ENCODE measurements at regions of chr9 and their contacts with region 1.

Region 1: DNA sequence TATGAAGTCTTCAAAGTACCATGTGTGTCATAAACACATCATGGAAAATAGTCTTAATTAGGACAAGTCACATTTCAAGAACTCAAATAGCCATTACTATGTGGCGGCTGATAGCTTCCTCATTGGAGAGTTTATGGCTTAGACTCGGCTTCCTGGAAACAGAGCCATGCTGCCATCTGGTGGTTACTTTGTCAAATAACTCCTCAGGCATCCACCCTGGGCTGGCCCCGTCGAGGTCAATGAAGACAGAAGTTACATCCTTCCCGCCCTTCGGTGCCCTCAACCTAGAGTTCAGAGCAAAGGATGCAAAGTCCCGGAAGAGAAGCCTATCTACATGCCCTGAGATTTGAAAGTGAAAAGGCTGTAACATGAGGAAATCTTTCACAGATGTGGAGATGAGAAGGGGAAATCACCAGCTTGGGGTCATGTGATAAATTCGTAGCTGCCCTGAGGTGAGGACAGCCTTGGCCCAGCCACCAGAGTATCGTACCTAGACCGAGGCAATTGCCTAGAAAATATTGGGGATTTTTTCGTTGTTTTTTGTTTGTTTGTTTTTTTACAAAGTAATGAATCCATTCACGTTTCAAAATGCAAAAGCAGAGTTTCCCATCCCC is 45.5 kb upstream of the ZNF169 start:
- DNase-seq: peak; percentile 40 to 82
- ATAC-seq: peak; percentile 90 to 97 (median 96)
- H3K4me3 ChIP-seq: no peak overlapping the region
- H3K27ac ChIP-seq: no peak overlapping the region
- H3K4me1 ChIP-seq: peaks cover 0 to 7% (median 0%) of the 10 kb centered on the region in 9 donors
- H3K27me3 ChIP-seq: peaks cover 0 to 6% (median 0%) of the 10 kb centered on the region in 7 donors
- CTCF ChIP-seq: peak; percentile 64 to 94 (median 89)

Region 2: DNA sequence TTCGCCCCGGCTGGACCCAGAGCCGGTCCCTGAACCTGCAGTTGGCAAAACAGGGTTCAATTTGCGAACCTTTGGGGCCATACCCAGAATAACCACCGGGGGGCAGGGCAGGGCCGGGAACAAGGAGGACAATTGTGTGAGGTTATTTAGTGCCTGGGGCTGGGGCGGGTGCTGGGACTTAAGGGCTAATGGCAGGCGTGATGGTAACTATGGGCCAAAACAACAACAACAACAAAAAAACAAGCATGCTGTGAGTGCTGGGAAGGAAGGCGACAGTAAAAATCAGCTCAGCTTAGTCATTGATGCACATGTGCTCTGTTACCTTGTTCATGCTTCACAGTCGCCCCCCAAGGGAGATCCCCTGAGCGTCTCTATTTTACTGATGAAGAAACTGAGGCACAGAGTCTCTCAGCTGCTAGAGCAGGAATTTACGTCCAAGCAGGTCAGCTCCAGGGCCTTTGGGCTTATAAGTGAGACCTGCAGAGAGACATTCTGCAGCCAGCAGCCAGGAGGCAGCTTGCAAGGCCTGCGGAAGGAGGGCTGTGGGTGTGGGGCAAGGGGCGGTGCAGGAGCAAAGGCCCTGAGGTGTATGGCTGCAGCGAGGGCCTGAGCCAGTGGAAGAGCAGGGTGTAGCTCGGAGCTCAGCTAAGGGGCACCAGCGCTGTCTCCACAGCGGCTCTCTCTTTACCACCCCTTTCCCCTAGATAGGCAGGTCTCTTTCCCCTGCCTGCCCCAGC is 531.2 kb before region 1 on chr9:
- intact Hi-C with region 1: loop called in 5 of 10 experiments (anchors 5 to 10 kb)
- DNase-seq: peak; percentile 48 to 59
- ATAC-seq: peak in 7 of 8 donors; percentile 31 to 68 (median 60)
- H3K4me3 ChIP-seq: no peak overlapping the region
- H3K27ac ChIP-seq: no peak overlapping the region
- H3K4me1 ChIP-seq: no peaks in the 10 kb centered on the region
- H3K27me3 ChIP-seq: no peaks in the 10 kb centered on the region
- CTCF ChIP-seq: peak; percentile 61 to 85 (median 78)

Region 3: GRCh38 chr9:94065535-94065961 is 148.1 kb before region 1 on chr9:
- intact Hi-C with region 1: loop called (anchors 1 to 5 kb)
- DNase-seq: peak; percentile 40 to 78
- ATAC-seq: peak; percentile 71 to 91 (median 84)
- H3K4me3 ChIP-seq: no peak overlapping the region
- H3K27ac ChIP-seq: peak overlapping the region in 3 of 10 donors; percentile 8 to 38 (median 31)
- H3K4me1 ChIP-seq: peaks cover 0 to 13% (median 3%) of the 10 kb centered on the region in 9 donors
- H3K27me3 ChIP-seq: no peaks in the 10 kb centered on the region
- CTCF ChIP-seq: peak; percentile 69 to 96 (median 89)

Region 4: GRCh38 chr9:94139672-94140417 is 73.8 kb before region 1 on chr9:
- intact Hi-C with region 1: loop called in 1 of 10 experiments (anchors 10 kb)
- DNase-seq: peak; percentile 84 to 90
- ATAC-seq: peak; percentile 81 to 96 (median 88)
- H3K4me3 ChIP-seq: peak overlapping the region in 4 of 10 donors; percentile 11 to 28 (median 18)
- H3K27ac ChIP-seq: peak overlapping the region; percentile 66 to 91 (median 81)
- H3K4me1 ChIP-seq: peaks cover 12 to 48% (median 41%) of the 10 kb centered on the region in 9 donors
- H3K27me3 ChIP-seq: no peaks in the 10 kb centered on the region
- CTCF ChIP-seq: no peak

Region 5: DNA sequence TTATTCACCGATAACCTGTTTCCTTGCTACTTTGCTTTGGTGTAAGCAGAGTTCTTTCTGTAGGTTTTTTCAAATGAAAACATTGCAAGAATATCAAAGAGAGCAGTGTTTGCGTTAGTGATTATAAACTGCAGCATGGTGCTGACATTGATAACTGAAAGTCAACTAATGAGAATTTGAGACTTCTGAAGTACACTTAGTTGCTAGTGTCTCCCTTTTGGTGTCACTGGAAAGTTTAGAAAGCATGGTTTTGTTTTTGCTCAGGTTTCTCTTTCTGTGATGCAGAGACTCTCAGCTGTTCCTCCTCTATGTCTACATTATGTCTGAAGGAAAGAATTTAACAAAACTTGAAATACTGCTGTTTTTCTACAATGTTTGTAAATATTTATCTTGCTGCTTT is 34.7 kb before region 1 on chr9:
- intact Hi-C with region 1: loop called in 2 of 10 experiments (anchors 5 kb)
- DNase-seq: no peak
- ATAC-seq: no peak
- H3K4me3 ChIP-seq: no peak overlapping the region
- H3K27ac ChIP-seq: no peak overlapping the region
- H3K4me1 ChIP-seq: peaks cover 5 to 97% (median 78%) of the 10 kb centered on the region in 9 donors
- H3K27me3 ChIP-seq: no peaks in the 10 kb centered on the region
- CTCF ChIP-seq: no peak